GM23248 (cell line): ENCODE measurements at regions of chr4 and their contacts with region 1.

Region 1: GRCh38 chr4:153142700-153143438 is 61.4 kb upstream of the TRIM2 start:
- DNase-seq: peak; percentile 88
- H3K4me3 ChIP-seq: peak overlapping the region; percentile 51
- H3K27ac ChIP-seq: peak overlapping the region; percentile 45
- H3K4me1 ChIP-seq: peaks cover 32% of the 10 kb centered on the region
- H3K27me3 ChIP-seq: no peaks in the 10 kb centered on the region

Region 2: DNA sequence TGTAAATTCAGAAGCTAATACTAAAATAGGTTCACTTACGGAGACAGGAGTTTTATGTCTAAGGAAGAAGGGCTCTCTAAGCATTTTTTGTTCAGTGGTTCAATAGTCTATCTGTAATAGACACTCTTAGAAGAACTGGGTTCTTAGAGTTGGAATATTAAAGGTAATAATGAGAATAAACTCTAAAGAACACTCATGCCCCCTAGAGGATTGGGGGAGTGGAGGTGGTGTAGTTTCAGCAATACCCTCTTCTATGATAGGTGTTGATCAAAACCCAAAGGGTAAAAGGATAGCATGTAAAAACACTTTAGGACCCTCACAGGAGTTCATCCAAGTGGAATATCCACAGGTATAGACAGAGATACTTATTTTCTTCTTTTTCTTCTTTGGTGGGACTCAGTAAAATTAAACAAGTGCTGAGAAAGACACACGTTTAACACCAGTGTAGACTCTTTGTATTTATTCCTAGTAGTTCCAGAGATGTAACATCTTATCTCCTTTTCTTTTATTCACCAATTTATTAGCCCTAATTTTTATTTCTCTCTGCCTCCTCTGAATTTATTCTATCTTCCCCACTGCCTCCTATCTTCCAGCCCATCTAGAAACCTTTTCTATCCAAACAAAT is 175.9 kb after region 1 on chr4:
- in situ Hi-C with region 1: loop called (anchors 5 kb)
- DNase-seq: peak; percentile 67
- H3K4me3 ChIP-seq: no peak overlapping the region
- H3K27ac ChIP-seq: no peak overlapping the region
- H3K4me1 ChIP-seq: no peaks in the 10 kb centered on the region
- H3K27me3 ChIP-seq: no peaks in the 10 kb centered on the region

Region 3: DNA sequence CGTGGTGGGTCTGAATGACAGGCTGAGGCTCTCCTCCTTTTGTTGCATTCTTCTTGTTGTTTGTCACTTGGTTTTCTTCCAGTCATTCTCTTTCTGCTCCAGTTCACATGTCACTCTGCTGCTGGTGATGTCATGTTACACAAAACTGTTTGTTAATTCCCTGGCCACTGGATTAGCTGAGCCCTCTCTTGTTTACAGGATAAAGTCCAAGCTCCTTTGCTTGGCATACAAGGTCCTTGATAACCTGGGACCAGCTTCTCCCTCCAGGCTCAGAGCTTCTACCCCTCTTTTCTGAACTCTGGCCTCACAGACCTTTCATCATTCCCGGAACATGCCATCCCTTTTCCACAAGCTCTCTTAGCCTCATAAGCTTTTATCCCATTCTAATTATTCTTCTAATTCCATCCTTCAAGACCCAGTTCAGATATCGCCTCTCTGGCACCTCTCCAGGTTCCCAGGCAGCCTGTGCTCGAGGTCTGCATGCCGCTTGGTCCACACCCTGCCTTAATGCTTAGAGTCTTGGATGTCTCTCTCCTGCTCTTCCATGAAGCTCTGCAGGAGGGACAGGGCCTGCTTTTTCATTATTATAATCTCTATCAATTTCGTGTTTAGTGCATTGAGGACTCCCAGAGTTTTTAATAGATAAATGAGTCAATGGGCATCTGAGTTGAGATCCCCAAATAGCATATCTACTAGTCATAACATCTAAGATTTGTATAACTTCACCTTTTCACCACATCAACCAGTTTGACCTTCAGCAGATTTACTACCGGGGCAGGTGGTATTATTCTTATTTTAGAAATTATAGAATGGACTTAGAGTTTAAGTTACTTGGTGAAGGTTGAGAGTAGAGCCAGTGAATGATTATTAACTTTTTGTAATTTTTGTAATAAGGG is 422.0 kb after region 1 on chr4:
- in situ Hi-C with region 1: loop called (anchors 5 kb)
- DNase-seq: peak; percentile 58
- H3K4me3 ChIP-seq: no peak overlapping the region
- H3K27ac ChIP-seq: no peak overlapping the region
- H3K4me1 ChIP-seq: peaks cover 11% of the 10 kb centered on the region; the same call in 1 of the 2 replicates
- H3K27me3 ChIP-seq: no peaks in the 10 kb centered on the region